Sciatic nerve (tissue), 2 donors: ENCODE measurements at regions of chr14 and their contacts with region 1.

Region 1: GRCh38 chr14:105086833-105087307 is 21.6 kb upstream of the GPR132 start:
- DNase-seq: peak; percentile 85
- ATAC-seq: peak; percentile 51

Region 2: DNA sequence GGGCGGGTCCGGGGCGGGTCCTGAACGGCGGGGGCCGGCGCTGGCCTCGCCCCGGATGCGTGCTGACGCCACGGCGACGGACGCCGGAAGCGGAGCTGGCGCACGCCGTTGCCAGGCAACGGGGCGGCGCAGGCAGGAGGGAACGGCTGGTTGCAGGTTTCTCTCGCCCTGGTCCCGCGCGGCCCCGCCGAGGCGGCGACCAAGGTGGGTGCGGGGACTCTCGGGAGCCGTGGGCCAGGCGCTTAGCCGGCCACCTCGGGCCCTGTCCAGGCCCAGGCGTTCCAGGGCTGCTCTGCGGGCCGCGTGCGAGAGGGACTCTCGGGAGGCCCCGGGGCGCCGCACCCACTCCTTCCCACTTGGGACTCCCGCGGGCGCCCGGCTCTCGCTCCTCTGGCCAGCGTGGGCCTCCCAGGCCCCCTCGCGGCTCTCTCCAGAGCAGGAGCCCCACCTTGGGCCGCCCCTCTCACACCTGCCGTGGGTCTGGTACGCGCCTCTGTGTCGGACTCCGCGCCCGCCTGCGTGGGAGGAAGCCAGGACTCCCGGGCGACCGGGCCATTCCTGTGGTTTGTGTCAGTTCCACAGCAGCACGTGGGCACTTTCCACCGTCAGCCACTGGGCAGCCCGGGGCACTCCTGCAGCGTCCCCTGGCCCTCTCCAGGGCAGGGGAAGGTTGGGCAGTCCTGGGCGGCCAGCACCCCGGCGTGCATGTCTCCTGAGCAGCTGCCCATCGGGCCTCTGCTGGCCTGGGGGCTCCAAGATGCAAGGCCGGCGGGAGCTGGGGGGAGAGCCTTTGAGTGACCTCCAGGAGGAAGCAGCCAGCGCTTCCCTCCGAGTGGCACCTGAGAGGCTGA is 101.0 kb before region 1 on chr14 and contains the start of gene CLBA1:
- intact Hi-C with region 1: loop called (anchors 10 kb)
- DNase-seq: peak; percentile 92
- ATAC-seq: peak; percentile 94
- total RNA-seq, gene CLBA1: 6.1 TPM

Region 3: DNA sequence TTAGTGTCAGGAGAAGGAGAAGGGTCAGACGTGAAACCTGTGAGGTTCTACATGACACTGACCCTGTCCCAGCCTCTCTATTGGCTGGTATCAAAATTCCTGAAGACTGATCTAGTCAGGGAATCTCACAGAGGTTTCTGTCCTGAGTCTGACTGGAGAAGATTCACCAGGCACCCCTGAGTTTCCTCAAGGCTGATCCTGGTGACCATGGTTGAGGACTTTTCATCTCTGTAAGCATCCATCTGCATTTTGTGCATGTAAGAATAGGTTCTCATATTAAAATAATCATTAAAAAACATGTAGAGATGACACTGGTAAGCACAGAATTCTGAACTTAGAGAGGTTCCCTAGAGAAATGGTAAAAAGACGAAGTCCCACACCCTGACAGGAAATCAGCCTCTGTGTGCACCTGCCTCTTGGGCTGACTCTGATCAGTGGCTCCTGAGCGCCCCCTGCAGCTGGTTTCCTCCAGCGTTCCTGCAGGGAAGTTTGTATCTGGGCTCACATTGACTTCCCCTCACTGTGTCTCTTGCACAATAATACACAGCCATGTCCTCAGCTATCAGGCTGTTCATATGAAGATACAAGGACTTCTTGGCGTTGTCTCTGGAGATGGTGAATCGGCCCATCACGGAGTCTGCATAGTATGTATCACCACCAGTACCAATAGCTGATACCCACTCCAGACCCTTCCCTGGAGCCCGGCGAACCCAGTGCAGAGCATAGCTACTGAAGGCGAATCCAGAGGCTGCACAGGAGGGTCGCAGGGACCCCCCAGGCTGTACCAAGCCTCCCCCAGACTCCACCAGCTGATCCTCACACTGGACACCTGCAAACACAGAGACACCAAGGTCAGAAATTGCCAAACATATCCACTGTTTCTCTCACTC is 1431.4 kb after region 1 on chr14:
- intact Hi-C with region 1: no loop called
- DNase-seq: peak; percentile 67
- ATAC-seq: no peak